Right ventricle myocardium inferior (tissue), 1 donor: ENCODE measurements at regions of chr19 and their contacts with region 1.

Region 1: DNA sequence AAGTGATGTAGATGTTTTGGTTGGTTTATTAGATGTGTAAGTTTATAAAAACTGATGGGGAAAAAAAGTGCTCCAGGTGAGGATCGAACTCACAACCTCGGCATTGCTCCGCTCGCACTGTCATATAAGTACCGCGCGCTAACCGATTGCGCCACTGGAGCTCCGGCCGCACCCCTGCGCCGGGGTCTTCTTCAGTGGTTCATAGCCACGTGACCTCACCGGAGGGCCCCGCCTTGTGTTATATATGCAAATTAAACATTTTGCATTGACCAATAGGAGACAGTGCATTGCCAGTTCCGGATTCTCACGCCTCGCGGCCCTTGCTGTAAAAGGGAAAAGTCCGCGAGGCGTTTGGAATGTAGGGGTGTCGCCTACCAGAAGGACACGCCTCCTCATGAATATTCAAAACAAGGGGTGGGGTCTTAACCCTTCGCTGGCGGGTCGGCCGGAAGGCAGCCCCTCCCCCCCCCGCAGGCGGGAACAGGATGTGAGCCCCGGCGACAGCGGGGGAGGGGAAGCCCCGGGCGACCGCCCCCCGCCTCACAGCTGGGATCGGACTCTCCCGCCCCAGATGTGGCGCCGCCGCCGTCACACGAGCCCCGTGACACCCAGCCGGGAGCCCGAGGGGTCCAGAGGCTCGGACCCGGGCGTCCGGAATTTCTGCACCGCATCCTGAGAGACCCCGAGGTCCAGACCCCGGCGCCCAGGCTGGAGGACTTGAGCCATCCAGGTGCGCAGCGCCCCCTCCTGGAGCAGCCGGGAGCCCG is at the start of gene PLEKHG2:
- DNase-seq: peak; percentile 98
- ATAC-seq: peak; percentile 70
- total RNA-seq, gene PLEKHG2: 10.4 TPM

Region 2: DNA sequence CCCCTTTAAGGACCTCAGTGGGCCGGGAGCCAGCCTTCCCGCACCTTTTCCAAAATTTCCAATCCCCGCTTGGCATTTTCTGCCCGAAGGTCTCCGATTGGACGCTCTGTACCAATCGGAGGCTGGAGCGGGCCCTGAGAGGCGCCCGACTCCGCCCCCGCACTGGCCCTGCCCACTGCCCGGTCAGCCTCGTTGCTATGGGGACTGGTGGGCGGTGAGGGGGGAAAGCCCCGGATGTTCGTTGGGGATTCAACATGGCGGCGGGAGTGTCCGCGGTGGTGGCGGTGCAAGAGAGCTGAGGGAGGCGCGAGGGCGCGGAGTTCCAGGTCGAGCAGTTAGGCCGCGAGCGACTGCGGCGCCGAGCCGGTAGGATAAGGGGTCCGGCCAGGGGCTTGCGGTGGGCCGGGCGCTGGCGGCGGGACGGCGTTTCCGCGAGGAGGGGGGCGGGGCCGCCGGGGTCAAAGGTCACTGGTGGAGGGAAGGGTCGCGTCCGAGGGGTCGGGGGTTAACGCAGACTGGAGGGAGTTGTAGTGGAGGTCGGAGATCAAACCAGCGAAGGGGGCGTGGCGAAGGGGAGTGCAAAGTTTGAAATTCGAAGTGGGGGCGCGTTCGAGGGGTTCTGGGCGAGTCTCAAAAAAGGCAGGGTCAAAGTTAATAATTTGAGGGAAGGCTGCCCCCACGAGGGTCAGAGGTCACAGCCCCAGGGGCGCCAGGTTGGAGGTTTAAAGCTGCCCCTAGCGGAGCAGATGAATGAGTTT is 286.6 kb before region 1 on chr19 and contains the start of gene PAK4:
- intact Hi-C with region 1: loop called (anchors 5 kb)
- DNase-seq: peak; percentile 98
- ATAC-seq: peak; percentile 100
- total RNA-seq, gene PAK4: 16.2 TPM

Region 3: DNA sequence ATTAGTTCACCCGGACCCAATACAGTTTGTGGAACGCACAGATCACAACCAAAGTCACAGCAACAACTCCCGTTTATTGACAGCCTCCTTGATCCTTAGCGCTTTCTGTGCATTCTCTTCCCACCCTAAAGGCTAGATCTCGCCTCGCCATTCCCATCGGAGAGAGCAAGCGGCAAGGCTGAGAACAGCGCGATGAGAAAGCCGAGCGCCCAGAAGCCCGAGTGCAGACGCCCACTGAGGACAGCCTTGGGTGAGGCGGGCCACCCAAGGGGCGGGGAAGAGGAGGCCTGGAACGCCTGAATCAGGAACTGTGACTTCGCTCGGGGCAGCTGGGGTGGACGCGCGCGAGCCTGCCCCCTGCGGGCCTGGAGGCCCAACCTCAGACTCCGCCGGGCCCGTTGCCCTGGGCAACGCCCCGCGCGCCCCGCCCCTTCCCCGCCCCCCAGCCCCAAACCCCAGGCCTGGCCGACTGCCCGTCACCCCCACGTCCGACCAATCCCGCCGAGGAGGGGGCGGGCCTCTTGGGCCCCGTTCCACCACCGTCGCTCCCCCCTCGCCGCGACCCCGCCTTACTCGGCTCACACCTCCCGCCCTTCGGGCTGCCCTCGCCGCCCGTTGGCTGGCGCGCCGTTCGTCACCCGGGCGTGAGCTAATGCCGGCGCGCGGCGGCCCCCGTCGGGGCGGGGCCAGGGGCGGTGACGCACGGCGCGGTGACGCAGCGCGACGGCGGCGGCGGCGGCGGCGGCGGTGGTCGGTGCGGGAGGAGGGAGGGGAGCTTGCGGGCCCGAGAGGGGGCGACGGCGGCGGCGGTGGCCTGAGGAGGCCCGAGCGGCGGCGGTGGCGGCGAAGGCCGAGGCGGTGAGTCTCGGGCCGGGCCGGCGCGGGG is 70.3 kb before region 1 on chr19 and contains the start of gene SAMD4B:
- intact Hi-C with region 1: loop called (anchors 5 kb)
- DNase-seq: peak; percentile 99
- ATAC-seq: peak; percentile 98
- total RNA-seq, gene SAMD4B: 40.6 TPM

Region 4: GRCh38 chr19:39397360-39398296 is 14.7 kb before region 1 on chr19:
- intact Hi-C with region 1: loop called (anchors 1 kb)
- DNase-seq: peak; percentile 96
- ATAC-seq: peak; percentile 85

Region 5: DNA sequence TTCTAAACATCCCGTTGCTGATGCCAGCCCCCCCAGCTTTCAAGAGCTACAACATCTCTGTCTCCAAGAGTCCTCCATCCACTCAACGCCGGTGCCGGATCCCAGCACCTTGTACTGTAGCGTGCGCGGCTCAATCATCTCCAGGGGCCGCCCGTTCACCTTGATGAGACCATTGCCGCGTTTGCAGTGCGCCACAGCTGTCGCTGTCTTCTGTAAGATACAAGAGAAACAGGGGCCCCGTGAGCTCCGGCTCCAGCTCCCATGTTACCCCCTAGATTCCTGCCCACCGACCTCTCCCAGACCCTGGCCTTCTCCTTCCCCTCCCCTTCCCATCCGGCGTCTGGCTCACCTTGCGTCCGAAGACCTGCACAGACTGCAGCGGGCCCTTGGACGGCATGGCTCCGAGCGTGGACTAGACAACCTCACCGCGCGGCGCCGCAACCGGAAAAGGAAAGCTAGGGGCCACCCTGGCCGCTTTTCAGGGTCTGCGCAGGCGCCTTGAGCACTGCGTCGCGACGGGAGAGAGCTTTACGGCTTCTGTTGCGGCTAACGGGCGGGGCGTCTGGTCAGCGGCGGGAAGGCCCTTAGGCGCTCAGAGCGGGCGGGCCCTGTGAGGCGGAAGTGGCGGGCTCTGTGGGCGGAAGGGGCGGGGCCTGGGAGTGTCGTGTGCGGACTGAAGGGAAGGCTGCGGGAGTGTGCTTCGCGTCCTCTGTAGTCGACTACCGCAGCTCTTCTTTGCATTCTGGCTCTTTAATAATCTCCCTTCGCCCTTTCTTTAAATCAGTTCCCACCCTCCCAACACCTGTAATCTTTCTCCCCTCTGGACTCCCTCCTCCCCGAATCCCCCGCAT is 23.4 kb after region 1 on chr19 and contains the start of gene RPS16:
- intact Hi-C with region 1: loop called (anchors 2 kb)
- DNase-seq: peak; percentile 99
- ATAC-seq: peak; percentile 99
- total RNA-seq, gene RPS16: 1,258 TPM